ENCODE measurements at regions of chr1 and their contacts with region 1.

Region 1: DNA sequence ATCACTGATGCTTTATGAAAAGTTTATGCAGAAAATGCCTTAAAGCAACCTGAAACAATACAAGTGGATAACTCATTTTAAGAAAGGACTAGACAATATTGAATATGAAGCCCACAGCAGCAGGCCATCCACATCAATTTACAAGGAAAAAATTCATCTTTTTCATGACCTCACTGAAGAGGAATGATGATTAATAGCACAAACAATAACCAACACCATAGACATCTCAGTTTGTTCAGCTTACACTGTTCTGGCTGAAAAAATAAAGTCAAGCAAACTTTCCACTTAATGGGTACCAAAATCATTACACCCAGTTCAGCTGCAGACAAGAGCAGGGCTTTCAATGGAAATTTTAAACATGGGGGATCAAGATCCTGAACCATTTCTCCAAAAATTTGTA is 380.6 kb upstream of the NEGR1 start:
- DNase-seq: no peak
- H3K4me3 ChIP-seq: no peak overlapping the region
- H3K27ac ChIP-seq: no peak overlapping the region
- H3K4me1 ChIP-seq: no peaks in the 10 kb centered on the region
- H3K27me3 ChIP-seq: no peaks in the 10 kb centered on the region
- CTCF ChIP-seq: no peak
- EP300 ChIP-seq: no peak
- POLR2A ChIP-seq: no peak

Region 2: GRCh38 chr1:72678683-72679082 is 15.8 kb after region 1 on chr1:
- in situ Hi-C with region 1: no loop called
- intact Hi-C with region 1: loop called (anchors 2 kb)
- DNase-seq: no peak
- H3K4me3 ChIP-seq: no peak overlapping the region
- H3K27ac ChIP-seq: no peak overlapping the region
- H3K4me1 ChIP-seq: no peaks in the 10 kb centered on the region
- H3K27me3 ChIP-seq: no peaks in the 10 kb centered on the region
- CTCF ChIP-seq: no peak
- EP300 ChIP-seq: no peak
- POLR2A ChIP-seq: no peak